CD8-positive, alpha-beta T cell (primary cell): ENCODE measurements at regions of chr2 and their contacts with region 1.

Region 1: GRCh38 chr2:13006829-13007717 is 290.3 kb downstream of the TRIB2 start:
- DNase-seq: peak; percentile 27 to 77 (median 64)
- ATAC-seq: peak; percentile 56
- H3K4me3 ChIP-seq: no peak overlapping the region
- H3K4me3 Mint-ChIP-seq: no peak overlapping the region
- H3K27ac ChIP-seq: no peak overlapping the region
- H3K27ac Mint-ChIP-seq: no peak overlapping the region
- H3K4me1 ChIP-seq: no peaks in the 10 kb centered on the region
- H3K4me1 Mint-ChIP-seq: peaks cover 2% of the 10 kb centered on the region
- H3K27me3 ChIP-seq: no peaks in the 10 kb centered on the region
- H3K27me3 Mint-ChIP-seq: peaks cover 19% of the 10 kb centered on the region
- CTCF ChIP-seq: peak; percentile 95

Region 2: GRCh38 chr2:11688222-11689069 is 1318.6 kb before region 1 on chr2:
- CTCF ChIA-PET with region 1: interaction called, 10 read pairs
- POLR2A ChIA-PET with region 1: no interaction called
- intact Hi-C with region 1: loop called (anchors 2 to 5 kb)
- DNase-seq: peak; percentile 62 to 86 (median 81)
- ATAC-seq: peak; percentile 85
- H3K4me3 ChIP-seq: no peak overlapping the region
- H3K4me3 Mint-ChIP-seq: peak overlapping the region; percentile 58
- H3K27ac ChIP-seq: no peak overlapping the region
- H3K27ac Mint-ChIP-seq: no peak overlapping the region
- H3K4me1 ChIP-seq: peaks cover 4% of the 10 kb centered on the region
- H3K4me1 Mint-ChIP-seq: peaks cover 11% of the 10 kb centered on the region
- H3K27me3 ChIP-seq: peaks cover 0 to 4% of the 10 kb centered on the region in 2 experiments
- H3K27me3 Mint-ChIP-seq: peaks cover 8% of the 10 kb centered on the region
- CTCF ChIP-seq: peak; percentile 96

Region 3: DNA sequence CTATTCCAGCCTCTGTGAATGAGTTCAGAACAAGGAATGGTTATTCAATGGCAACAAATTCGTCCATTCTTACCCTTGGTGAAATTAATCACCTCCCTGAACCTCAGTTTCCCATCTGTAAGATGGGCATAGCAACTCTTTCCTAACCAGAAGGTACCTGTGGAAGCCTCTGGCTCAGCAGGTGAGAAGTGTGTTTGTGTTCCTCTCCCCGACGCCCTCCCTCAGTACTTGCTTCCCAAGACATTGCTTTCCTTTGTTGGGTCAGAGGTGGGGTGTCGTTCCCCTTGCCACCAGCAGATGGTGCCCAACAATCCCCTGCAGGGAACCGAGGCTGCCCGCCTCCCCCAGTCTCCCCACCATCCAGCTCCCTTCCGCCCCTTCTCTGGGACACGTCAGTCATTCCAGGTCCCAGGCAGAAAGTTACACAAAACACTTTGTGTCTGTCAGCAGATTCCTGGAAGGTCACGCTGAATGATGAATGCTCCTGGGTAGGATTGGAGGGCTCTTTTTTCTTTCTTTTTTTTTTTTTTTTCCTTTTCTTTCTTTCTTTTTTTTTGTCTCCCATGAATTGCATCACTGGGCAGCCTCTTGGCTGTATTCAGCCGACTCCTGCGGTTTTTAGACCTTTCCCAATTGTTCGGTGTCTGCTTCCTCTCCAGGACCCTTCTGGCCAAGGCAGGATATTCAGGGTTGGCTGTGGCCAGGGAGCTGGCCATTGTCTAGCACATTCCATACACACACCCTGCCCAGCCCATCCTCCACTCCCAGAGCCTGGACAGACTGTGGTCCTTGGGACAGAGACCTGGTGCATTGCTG is 1143.4 kb before region 1 on chr2:
- CTCF ChIA-PET with region 1: interaction called, 62 read pairs
- POLR2A ChIA-PET with region 1: no interaction called
- intact Hi-C with region 1: loop called in 1 of 2 experiments (anchors 1 kb)
- DNase-seq: peak; percentile 27 to 81 (median 68)
- ATAC-seq: peak; percentile 93
- H3K4me3 ChIP-seq: no peak overlapping the region
- H3K4me3 Mint-ChIP-seq: peak overlapping the region; percentile 27
- H3K27ac ChIP-seq: no peak overlapping the region
- H3K27ac Mint-ChIP-seq: no peak overlapping the region
- H3K4me1 ChIP-seq: peaks cover 3% of the 10 kb centered on the region
- H3K4me1 Mint-ChIP-seq: peaks cover 12% of the 10 kb centered on the region
- H3K27me3 ChIP-seq: no peaks in the 10 kb centered on the region
- H3K27me3 Mint-ChIP-seq: peaks cover 2% of the 10 kb centered on the region
- CTCF ChIP-seq: peak; percentile 97

Region 4: GRCh38 chr2:12416600-12416999 is 590.5 kb before region 1 on chr2:
- CTCF ChIA-PET with region 1: interaction called, 17 read pairs
- POLR2A ChIA-PET with region 1: no interaction called
- intact Hi-C with region 1: loop called (anchors 1 to 2 kb)
- DNase-seq: peak; percentile 34 to 78 (median 58)
- ATAC-seq: peak; percentile 62
- H3K4me3 ChIP-seq: no peak overlapping the region
- H3K4me3 Mint-ChIP-seq: no peak overlapping the region
- H3K27ac ChIP-seq: no peak overlapping the region
- H3K27ac Mint-ChIP-seq: peak overlapping the region; percentile 5
- H3K4me1 ChIP-seq: peaks cover 20% of the 10 kb centered on the region
- H3K4me1 Mint-ChIP-seq: peaks cover 34% of the 10 kb centered on the region
- H3K27me3 ChIP-seq: no peaks in the 10 kb centered on the region
- H3K27me3 Mint-ChIP-seq: no peaks in the 10 kb centered on the region
- CTCF ChIP-seq: peak; percentile 43

Region 5: DNA sequence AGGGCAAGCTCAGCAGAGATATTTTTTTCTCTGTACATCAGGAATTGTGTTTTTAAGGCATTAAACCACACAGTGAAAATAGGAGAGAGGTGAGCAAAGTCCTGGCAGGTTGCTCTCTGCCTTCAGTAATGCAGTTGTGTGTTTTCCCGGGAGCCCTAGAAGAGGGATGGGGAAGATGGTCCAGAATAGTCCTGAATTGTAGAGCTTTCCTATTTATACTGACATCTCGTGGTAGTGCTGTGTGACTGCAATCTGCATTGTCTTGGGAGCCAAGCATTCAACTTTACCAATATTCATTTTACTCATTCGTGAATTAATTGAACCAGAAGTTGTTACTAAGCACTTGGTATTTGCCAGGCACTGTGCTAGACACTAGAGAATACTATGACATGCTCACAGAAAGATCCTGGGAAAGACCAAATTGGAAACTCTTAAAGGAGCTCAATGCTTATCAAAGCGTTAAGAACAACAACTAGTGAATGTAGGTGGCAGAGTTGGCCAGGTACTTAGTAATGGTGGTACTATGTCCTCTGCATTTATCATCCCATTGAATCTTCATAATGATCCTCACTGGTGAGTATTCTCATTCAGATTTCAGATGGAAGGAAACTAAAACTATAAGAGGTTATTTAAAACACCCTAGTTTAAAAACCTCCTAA is 75.8 kb before region 1 on chr2:
- CTCF ChIA-PET with region 1: interaction called, 24 read pairs
- POLR2A ChIA-PET with region 1: no interaction called
- intact Hi-C with region 1: loop called in 1 of 2 experiments (anchors 1 kb)
- DNase-seq: peak in 3 of 9 experiments; percentile 6 to 51 (median 28)
- ATAC-seq: peak; percentile 40
- H3K4me3 ChIP-seq: no peak overlapping the region
- H3K4me3 Mint-ChIP-seq: no peak overlapping the region
- H3K27ac ChIP-seq: no peak overlapping the region
- H3K27ac Mint-ChIP-seq: no peak overlapping the region
- H3K4me1 ChIP-seq: no peaks in the 10 kb centered on the region
- H3K4me1 Mint-ChIP-seq: no peaks in the 10 kb centered on the region
- H3K27me3 ChIP-seq: no peaks in the 10 kb centered on the region
- H3K27me3 Mint-ChIP-seq: peaks cover 2% of the 10 kb centered on the region
- CTCF ChIP-seq: peak; percentile 70

Region 6: DNA sequence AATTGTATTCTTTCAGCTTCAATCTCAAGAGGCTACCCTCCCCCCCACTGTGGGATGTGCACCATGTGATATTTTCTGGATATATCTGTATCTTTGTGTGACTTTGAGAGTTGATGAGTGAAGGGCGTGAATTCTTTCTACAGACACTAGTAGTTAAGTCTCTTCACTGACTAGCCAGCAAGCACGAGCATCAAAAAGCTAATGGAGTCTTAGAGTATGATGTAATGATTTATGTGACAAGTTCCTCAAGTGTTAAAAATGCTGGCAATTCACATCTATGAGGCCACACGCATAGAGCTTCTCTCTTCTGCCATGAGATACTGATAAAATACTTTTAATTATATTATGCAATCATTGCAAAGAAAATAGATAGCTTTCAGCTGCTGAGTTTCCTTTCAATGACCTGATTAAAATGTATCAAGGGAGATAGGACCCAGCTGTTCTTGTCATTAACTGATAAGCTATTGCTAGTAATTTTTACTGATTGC is 14.4 kb after region 1 on chr2:
- CTCF ChIA-PET with region 1: interaction called, 29 read pairs
- POLR2A ChIA-PET with region 1: no interaction called
- intact Hi-C with region 1: no loop called
- DNase-seq: no peak
- ATAC-seq: no peak
- H3K4me3 ChIP-seq: no peak overlapping the region
- H3K4me3 Mint-ChIP-seq: no peak overlapping the region
- H3K27ac ChIP-seq: no peak overlapping the region
- H3K27ac Mint-ChIP-seq: no peak overlapping the region
- H3K4me1 ChIP-seq: no peaks in the 10 kb centered on the region
- H3K4me1 Mint-ChIP-seq: no peaks in the 10 kb centered on the region
- H3K27me3 ChIP-seq: peaks cover 0 to 6% of the 10 kb centered on the region in 2 experiments
- H3K27me3 Mint-ChIP-seq: peaks cover 39% of the 10 kb centered on the region
- CTCF ChIP-seq: no peak

Region 7: GRCh38 chr2:14303366-14304115 is 1296.5 kb after region 1 on chr2:
- CTCF ChIA-PET with region 1: no interaction called
- POLR2A ChIA-PET with region 1: no interaction called
- intact Hi-C with region 1: no loop called
- DNase-seq: no peak
- ATAC-seq: no peak
- H3K4me3 ChIP-seq: no peak overlapping the region
- H3K4me3 Mint-ChIP-seq: no peak overlapping the region
- H3K27ac ChIP-seq: no peak overlapping the region
- H3K27ac Mint-ChIP-seq: no peak overlapping the region
- H3K4me1 ChIP-seq: no peaks in the 10 kb centered on the region
- H3K4me1 Mint-ChIP-seq: no peaks in the 10 kb centered on the region
- H3K27me3 ChIP-seq: no peaks in the 10 kb centered on the region
- H3K27me3 Mint-ChIP-seq: no peaks in the 10 kb centered on the region
- CTCF ChIP-seq: no peak